CD8-positive, alpha-beta T cell (primary cell): ENCODE measurements at regions of chr4 and their contacts with region 1.

Region 1: GRCh38 chr4:123415977-123416376 is 19.4 kb downstream of the SPRY1 start:
- DNase-seq: peak in 5 of 9 experiments; percentile 29 to 58 (median 53)
- ATAC-seq: peak; percentile 83
- H3K4me3 ChIP-seq: no peak overlapping the region
- H3K4me3 Mint-ChIP-seq: no peak overlapping the region
- H3K27ac ChIP-seq: no peak overlapping the region
- H3K27ac Mint-ChIP-seq: peak overlapping the region; percentile 7
- H3K4me1 ChIP-seq: no peaks in the 10 kb centered on the region
- H3K4me1 Mint-ChIP-seq: peaks cover 53% of the 10 kb centered on the region
- H3K27me3 ChIP-seq: no peaks in the 10 kb centered on the region
- H3K27me3 Mint-ChIP-seq: no peaks in the 10 kb centered on the region
- CTCF ChIP-seq: no peak

Region 2: DNA sequence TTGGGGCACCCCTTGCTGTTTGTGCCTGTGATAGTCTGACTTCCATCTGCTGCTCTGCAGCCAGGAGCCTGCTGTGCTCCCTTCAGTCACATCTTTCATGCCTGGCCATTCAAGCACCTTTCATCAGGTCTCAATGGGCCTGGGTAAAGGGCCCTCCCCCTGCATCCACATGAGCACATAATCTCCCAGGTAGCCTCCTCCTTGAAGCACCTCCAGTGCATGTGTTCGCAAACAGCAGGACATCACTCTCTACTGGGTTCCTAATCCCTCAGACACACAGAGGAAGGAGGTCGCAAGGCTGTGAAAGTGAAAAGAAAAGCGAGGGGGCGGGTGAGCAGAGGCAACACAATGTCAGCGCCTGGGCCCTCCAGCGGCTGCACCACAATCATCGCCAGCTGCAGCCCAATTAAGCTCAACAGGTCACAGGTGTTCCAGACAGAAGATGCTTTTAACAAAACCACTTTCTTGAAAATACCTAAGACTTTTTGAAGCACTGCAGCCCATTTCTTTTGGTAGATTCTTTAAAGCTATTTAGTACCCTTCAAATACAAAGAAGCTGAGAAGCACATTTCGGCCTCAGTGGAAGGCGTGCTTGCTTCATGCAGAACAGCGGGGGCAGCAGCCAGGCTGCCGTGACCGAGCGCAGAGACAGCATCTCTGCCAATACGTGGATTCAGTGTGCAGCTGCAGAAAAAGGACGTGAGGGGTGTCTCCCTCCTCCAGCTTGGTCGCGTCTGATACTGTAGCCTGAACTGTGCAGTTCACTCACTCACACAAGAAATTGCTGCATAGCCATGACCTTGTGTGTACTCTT is 111.6 kb before region 1 on chr4:
- CTCF ChIA-PET with region 1: no interaction called
- POLR2A ChIA-PET with region 1: no interaction called
- intact Hi-C with region 1: no loop called
- DNase-seq: peak in 2 of 9 experiments; percentile 15 to 26
- ATAC-seq: no peak
- H3K4me3 ChIP-seq: no peak overlapping the region
- H3K4me3 Mint-ChIP-seq: no peak overlapping the region
- H3K27ac ChIP-seq: no peak overlapping the region
- H3K27ac Mint-ChIP-seq: peak overlapping the region; percentile 77
- H3K4me1 ChIP-seq: no peaks in the 10 kb centered on the region
- H3K4me1 Mint-ChIP-seq: peaks cover 10% of the 10 kb centered on the region
- H3K27me3 ChIP-seq: no peaks in the 10 kb centered on the region
- H3K27me3 Mint-ChIP-seq: no peaks in the 10 kb centered on the region
- CTCF ChIP-seq: no peak

Region 3: GRCh38 chr4:123444290-123444731 is 28.3 kb after region 1 on chr4:
- CTCF ChIA-PET with region 1: interaction called, 3 read pairs
- POLR2A ChIA-PET with region 1: no interaction called
- intact Hi-C with region 1: loop called in 1 of 2 experiments (anchors 2 kb)
- DNase-seq: peak in 8 of 9 experiments; percentile 5 to 67 (median 42)
- ATAC-seq: peak; percentile 88
- H3K4me3 ChIP-seq: peak overlapping the region in 1 of 2 experiments; percentile 26
- H3K4me3 Mint-ChIP-seq: peak overlapping the region; percentile 79
- H3K27ac ChIP-seq: peak overlapping the region in 1 of 2 experiments; percentile 30
- H3K27ac Mint-ChIP-seq: peak overlapping the region; percentile 95
- H3K4me1 ChIP-seq: peaks cover 14% of the 10 kb centered on the region
- H3K4me1 Mint-ChIP-seq: peaks cover 25% of the 10 kb centered on the region
- H3K27me3 ChIP-seq: no peaks in the 10 kb centered on the region
- H3K27me3 Mint-ChIP-seq: no peaks in the 10 kb centered on the region
- CTCF ChIP-seq: no peak

Region 4: DNA sequence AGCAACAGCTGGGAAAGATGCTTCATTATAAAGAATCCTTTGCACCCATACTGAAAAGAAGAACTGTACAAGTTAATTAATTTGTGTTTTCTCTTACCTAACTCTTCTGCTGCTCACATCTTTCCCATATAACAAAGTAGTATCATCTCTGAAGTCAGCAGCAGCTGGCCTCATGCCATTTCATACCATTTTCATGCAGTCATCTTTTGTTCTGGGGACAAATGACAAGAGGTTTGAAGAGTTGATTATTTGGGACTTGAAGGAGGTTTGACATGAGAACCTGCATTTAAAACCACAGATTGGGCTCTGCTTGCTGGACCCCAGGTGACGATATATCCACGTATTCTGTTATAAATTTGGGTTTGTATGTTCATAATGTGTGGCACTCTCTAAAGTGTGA is 410.9 kb after region 1 on chr4:
- CTCF ChIA-PET with region 1: no interaction called
- POLR2A ChIA-PET with region 1: no interaction called
- intact Hi-C with region 1: no loop called
- DNase-seq: no peak
- ATAC-seq: no peak
- H3K4me3 ChIP-seq: no peak overlapping the region
- H3K4me3 Mint-ChIP-seq: no peak overlapping the region
- H3K27ac ChIP-seq: no peak overlapping the region
- H3K27ac Mint-ChIP-seq: no peak overlapping the region
- H3K4me1 ChIP-seq: no peaks in the 10 kb centered on the region
- H3K4me1 Mint-ChIP-seq: no peaks in the 10 kb centered on the region
- H3K27me3 ChIP-seq: no peaks in the 10 kb centered on the region
- H3K27me3 Mint-ChIP-seq: peaks cover 8% of the 10 kb centered on the region
- CTCF ChIP-seq: no peak